CD8-positive, alpha-beta T cell (primary cell): ENCODE measurements at regions of chr7 and their contacts with region 1.

Region 1: GRCh38 chr7:135977007-135977741 is at the start of gene MTPN:
- DNase-seq: peak; percentile 94 to 98 (median 98)
- ATAC-seq: peak; percentile 81
- H3K4me3 ChIP-seq: peak within 1 kb of the TSS; percentile 89 to 93
- H3K4me3 Mint-ChIP-seq: peak within 1 kb of the TSS; percentile 92
- H3K27ac ChIP-seq: peak within 1 kb of the TSS; percentile 82 to 88
- H3K27ac Mint-ChIP-seq: peak within 1 kb of the TSS; percentile 93
- H3K4me1 ChIP-seq: peaks cover 71% of the 10 kb centered on the region
- H3K4me1 Mint-ChIP-seq: peaks cover 79% of the 10 kb centered on the region
- H3K27me3 ChIP-seq: no peaks in the 10 kb centered on the region
- H3K27me3 Mint-ChIP-seq: no peaks in the 10 kb centered on the region
- CTCF ChIP-seq: no peak
- total RNA-seq, gene MTPN: 91.9 to 101 TPM

Region 2: DNA sequence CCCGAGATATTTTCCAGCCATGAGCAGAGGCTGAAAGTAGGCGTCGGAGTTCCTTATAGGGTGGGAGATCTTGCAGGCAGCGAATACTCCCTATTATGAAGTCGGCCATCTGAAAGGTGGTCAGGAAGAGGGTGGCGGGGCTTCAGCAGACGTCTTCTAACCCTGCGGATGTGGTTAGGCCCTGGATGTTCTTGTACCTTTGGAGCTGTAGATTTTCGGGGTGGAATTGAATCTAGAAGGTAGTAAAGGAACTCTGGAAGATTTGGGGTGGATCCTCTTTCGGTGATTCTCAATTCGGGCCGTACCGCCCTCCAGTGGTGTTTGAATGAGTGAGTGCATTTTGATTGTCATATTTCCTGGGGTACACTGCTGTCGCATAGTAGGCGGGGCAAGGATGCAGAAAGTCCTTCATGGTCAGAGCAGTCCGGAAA is 418.8 kb before region 1 on chr7:
- CTCF ChIA-PET with region 1: no interaction called
- POLR2A ChIA-PET with region 1: no interaction called
- intact Hi-C with region 1: loop called (anchors 2 to 5 kb)
- DNase-seq: peak; percentile 37 to 87 (median 68)
- ATAC-seq: peak; percentile 52
- H3K4me3 ChIP-seq: peak overlapping the region; percentile 85 to 86
- H3K4me3 Mint-ChIP-seq: no peak overlapping the region
- H3K27ac ChIP-seq: peak overlapping the region; percentile 90 to 98
- H3K27ac Mint-ChIP-seq: no peak overlapping the region
- H3K4me1 ChIP-seq: peaks cover 16% of the 10 kb centered on the region
- H3K4me1 Mint-ChIP-seq: peaks cover 17% of the 10 kb centered on the region
- H3K27me3 ChIP-seq: no peaks in the 10 kb centered on the region
- H3K27me3 Mint-ChIP-seq: no peaks in the 10 kb centered on the region
- CTCF ChIP-seq: peak; percentile 52

Region 3: DNA sequence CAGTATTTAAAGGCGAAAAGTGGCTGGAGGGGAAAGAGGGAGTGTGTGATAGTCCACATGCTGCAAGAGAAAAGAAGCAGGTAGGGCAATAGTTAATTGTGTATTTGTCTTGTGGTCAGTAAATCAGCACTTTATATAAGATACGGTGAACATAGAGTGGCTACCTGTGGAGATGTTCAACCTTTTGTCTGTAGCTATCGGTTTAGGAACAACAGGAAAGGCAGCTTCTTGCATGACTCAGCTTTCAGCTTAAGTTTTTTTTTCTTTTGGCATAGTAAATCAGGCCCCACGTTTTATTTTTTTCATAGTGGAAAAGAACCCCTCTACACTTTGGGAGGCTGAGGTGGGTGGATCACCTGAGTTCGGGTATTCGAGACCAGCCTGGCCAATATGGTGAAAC is 14.1 kb after region 1 on chr7:
- CTCF ChIA-PET with region 1: no interaction called
- POLR2A ChIA-PET with region 1: no interaction called
- intact Hi-C with region 1: no loop called
- DNase-seq: no peak
- ATAC-seq: no peak
- H3K4me3 ChIP-seq: no peak overlapping the region
- H3K4me3 Mint-ChIP-seq: no peak overlapping the region
- H3K27ac ChIP-seq: no peak overlapping the region
- H3K27ac Mint-ChIP-seq: peak overlapping the region; percentile 11
- H3K4me1 ChIP-seq: no peaks in the 10 kb centered on the region
- H3K4me1 Mint-ChIP-seq: peaks cover 11% of the 10 kb centered on the region
- H3K27me3 ChIP-seq: no peaks in the 10 kb centered on the region
- H3K27me3 Mint-ChIP-seq: peaks cover 9% of the 10 kb centered on the region
- CTCF ChIP-seq: no peak